PC-9 (cell line): ENCODE measurements at regions of chr11 and their contacts with region 1.

Region 1: DNA sequence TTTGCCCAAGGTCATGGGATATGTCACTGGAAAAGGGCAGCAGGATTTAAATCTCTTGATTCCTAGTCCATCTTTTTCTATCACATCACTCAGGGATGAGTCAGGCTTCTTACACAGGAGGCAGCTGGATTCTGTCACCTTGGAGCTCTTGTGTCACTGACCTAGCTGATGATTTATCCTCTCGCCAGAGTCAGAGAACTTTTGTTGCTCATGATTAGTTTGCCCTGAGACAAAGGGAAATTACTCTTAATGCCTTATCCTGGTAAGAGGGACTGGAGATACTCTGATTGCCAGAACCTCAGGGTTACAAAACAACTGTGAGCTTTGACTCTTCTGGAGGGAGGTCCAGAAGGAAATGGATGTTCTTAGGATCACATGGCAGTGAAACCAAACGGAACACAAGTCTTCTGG is 10.1 kb downstream of the COA4 start:
- DNase-seq: peak in 1 of 2 experiments; percentile 71
- H3K4me3 ChIP-seq: no peak overlapping the region
- H3K27ac ChIP-seq: peak overlapping the region; percentile 14; the same call in 1 of the 2 replicates
- H3K4me1 ChIP-seq: 0 out of 2 replicates have a peak, but pooled peaks cover 5% of the 10 kb centered on the region
- H3K27me3 ChIP-seq: no peaks in the 10 kb centered on the region
- CTCF ChIP-seq: no peak

Region 2: DNA sequence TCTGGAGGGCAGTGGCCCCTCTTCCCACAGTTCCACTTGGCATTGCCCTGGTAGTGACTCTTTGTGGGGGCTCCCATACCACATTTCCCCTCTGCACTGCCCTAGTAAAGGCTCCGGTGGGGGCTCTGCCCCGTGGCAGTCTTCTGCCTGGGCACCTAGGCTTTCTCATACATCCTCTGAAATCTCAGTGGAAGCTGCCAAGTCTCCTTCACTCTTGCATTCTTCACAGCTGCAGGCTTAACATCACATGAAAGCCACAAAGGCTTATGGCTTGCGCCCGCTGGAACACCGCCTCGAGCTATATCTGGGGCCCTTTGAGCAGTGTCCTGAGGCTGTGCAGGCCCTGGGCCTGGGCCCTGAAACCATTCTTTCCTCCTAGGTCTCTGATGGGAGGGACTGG is 194.9 kb before region 1 on chr11:
- CTCF ChIA-PET with region 1: no interaction called
- POLR2A ChIA-PET with region 1: interaction called, 11 read pairs
- intact Hi-C with region 1: no loop called
- DNase-seq: no peak
- H3K4me3 ChIP-seq: no peak overlapping the region
- H3K27ac ChIP-seq: no peak overlapping the region
- H3K4me1 ChIP-seq: no peaks in the 10 kb centered on the region
- H3K27me3 ChIP-seq: no peaks in the 10 kb centered on the region
- CTCF ChIP-seq: no peak

Region 3: GRCh38 chr11:73680687-73681086 is 185.9 kb before region 1 on chr11:
- CTCF ChIA-PET with region 1: interaction called, 10 read pairs
- POLR2A ChIA-PET with region 1: interaction called, 11 read pairs
- intact Hi-C with region 1: no loop called
- DNase-seq: no peak
- H3K4me3 ChIP-seq: no peak overlapping the region
- H3K27ac ChIP-seq: no peak overlapping the region
- H3K4me1 ChIP-seq: no peaks in the 10 kb centered on the region
- H3K27me3 ChIP-seq: no peaks in the 10 kb centered on the region
- CTCF ChIP-seq: no peak

Region 4: GRCh38 chr11:74988541-74989260 is 1122.1 kb after region 1 on chr11 and contains the start of gene NEU3:
- CTCF ChIA-PET with region 1: no interaction called
- POLR2A ChIA-PET with region 1: interaction called, 16 read pairs
- intact Hi-C with region 1: no loop called
- DNase-seq: peak; percentile 75 to 81
- H3K4me3 ChIP-seq: peak within 1 kb of the TSS; percentile 77
- H3K27ac ChIP-seq: 0 out of 2 replicates have a peak within 1 kb of the TSS, but pooled peaks have one; percentile 30
- H3K4me1 ChIP-seq: peaks cover 9% of the 10 kb centered on the region
- H3K27me3 ChIP-seq: no peaks in the 10 kb centered on the region
- CTCF ChIP-seq: no peak
- total RNA-seq, gene NEU3: 9.9 and 11.8 TPM in 2 replicates